Vagina (tissue), 2 donors: ENCODE measurements at regions of chr1 and their contacts with region 1.

Region 1: GRCh38 chr1:179809506-179810366 is 66.6 kb downstream of the FAM163A start:
- DNase-seq: no peak
- H3K4me3 ChIP-seq: no peak overlapping the region
- H3K27ac ChIP-seq: no peak overlapping the region
- H3K4me1 ChIP-seq: peaks cover 7% of the 10 kb centered on the region
- H3K27me3 ChIP-seq: no peaks in the 10 kb centered on the region
- CTCF ChIP-seq: peak; percentile 77 to 84 (median 84)
- POLR2A ChIP-seq: no peak

Region 2: DNA sequence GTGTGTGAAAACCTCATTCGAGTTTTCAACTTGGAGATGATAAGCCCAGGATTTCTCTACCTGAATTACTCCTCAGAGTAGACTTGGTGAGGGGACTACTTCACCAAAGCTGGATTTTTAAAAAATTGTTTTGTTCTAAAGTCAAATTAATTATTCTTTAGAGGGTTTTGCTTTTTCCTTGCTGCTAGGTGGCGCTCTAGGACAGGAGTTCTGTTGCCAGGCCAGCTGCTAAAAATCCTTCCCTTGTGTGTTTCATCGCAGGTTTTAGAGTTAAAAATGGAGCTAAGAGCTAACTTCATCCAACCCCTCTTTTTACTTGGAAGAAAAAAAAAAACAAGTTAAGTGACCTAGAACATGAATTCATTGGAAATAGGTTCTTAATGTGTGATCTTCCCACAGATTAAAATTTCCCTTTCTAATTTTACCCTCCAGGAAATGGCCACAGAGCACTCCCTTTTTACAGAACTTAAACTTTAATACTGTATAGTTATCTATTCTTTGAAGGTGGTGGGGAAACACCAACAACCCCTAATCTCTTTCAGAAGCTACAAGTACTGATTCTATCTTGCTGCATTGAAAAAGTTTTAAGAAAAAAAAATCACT is 103.3 kb before region 1 on chr1:
- intact Hi-C with region 1: loop called (anchors 2 kb)
- DNase-seq: no peak
- H3K4me3 ChIP-seq: no peak overlapping the region
- H3K27ac ChIP-seq: no peak overlapping the region
- H3K4me1 ChIP-seq: no peaks in the 10 kb centered on the region
- H3K27me3 ChIP-seq: no peaks in the 10 kb centered on the region
- CTCF ChIP-seq: peak; percentile 41 to 73 (median 62)
- POLR2A ChIP-seq: no peak

Region 3: GRCh38 chr1:179781962-179782361 is 27.8 kb before region 1 on chr1:
- intact Hi-C with region 1: no loop called
- DNase-seq: no peak
- H3K4me3 ChIP-seq: no peak overlapping the region
- H3K27ac ChIP-seq: no peak overlapping the region
- H3K4me1 ChIP-seq: no peaks in the 10 kb centered on the region
- H3K27me3 ChIP-seq: no peaks in the 10 kb centered on the region
- CTCF ChIP-seq: no peak
- POLR2A ChIP-seq: no peak

Region 4: GRCh38 chr1:179996099-179996498 is 186.4 kb after region 1 on chr1:
- intact Hi-C with region 1: no loop called
- DNase-seq: no peak
- H3K4me3 ChIP-seq: no peak overlapping the region
- H3K27ac ChIP-seq: no peak overlapping the region
- H3K4me1 ChIP-seq: no peaks in the 10 kb centered on the region
- H3K27me3 ChIP-seq: no peaks in the 10 kb centered on the region
- CTCF ChIP-seq: no peak
- POLR2A ChIP-seq: no peak

Region 5: DNA sequence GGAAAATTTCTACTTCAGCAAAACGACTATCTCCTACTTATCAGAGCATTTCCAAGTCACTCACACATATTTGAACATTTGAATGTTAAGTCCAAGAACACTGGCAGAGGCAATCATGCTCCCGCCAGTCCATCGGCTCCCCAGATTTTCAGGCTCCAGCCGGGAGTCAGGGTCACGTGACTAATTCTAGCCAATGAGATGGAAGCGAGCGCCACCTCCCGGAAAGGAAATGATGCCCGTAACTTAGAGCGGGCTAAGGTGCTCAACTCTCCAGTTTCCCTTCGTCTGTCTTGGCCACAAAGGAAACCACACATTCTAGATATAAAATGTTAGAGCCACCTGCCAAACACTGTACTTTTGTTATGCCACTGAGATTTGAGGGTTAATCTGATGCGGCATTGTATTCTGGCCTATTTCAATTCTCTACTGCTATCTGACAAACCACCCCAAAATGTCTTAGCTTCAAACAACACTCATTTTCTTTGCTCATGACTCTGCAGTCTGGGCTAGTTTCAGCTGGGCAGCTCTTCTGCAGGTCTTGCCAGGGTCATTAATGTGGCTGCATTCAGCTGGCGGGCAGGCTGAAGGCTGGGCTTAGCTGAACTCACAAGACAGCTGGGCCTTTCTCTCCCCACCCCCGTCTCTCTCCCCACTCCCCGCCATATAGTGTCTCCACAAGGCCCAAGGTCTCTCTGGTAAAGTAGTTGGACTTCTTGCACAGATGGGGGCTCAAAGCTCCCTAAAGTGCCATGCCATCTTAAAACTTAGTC is 403.9 kb after region 1 on chr1:
- intact Hi-C with region 1: no loop called
- DNase-seq: no peak
- H3K4me3 ChIP-seq: no peak overlapping the region
- H3K27ac ChIP-seq: no peak overlapping the region
- H3K4me1 ChIP-seq: no peaks in the 10 kb centered on the region
- H3K27me3 ChIP-seq: no peaks in the 10 kb centered on the region
- CTCF ChIP-seq: no peak
- POLR2A ChIP-seq: no peak